ENCODE measurements at regions of chr11 and their contacts with region 1.

Region 1: DNA sequence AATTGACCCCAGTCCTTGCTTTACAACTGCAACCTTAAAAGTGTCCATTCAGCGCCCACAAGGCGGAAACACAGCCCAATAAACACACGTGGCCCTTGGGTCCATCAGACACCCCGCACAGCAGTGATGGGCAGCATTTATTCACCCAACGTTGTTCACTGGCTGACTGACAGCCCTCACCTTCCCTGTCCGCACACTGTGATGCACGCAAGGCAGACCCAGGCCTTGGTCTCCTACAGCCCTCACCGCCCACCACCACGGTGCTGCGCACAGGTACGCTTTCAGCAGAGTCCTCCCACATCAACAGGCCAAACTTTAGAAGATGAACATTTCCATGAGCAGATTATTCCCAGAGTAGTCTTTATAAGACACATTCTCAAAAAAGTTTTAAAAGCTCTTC is 20.7 kb upstream of the PHLDA2 start:
- DNase-seq: no peak
- H3K4me3 ChIP-seq: no peak overlapping the region
- H3K27ac ChIP-seq: no peak overlapping the region
- H3K4me1 ChIP-seq: peaks cover 0 to 13% of the 10 kb centered on the region in 2 donors
- H3K27me3 ChIP-seq: no peaks in the 10 kb centered on the region
- CTCF ChIP-seq: no peak
- POLR2A ChIP-seq: no peak

Region 2: GRCh38 chr11:2933384-2934020 is 16.4 kb before region 1 on chr11:
- intact Hi-C with region 1: loop called in 1 of 2 experiments (anchors 2 kb)
- DNase-seq: peak in 6 of 7 donors; percentile 61 to 80 (median 72)
- H3K4me3 ChIP-seq: no peak overlapping the region
- H3K27ac ChIP-seq: peak overlapping the region in 1 of 5 donors; percentile 71
- H3K4me1 ChIP-seq: peaks cover 16 to 22% of the 10 kb centered on the region in 2 donors
- H3K27me3 ChIP-seq: peaks cover 3% of the 10 kb centered on the region
- CTCF ChIP-seq: no peak
- POLR2A ChIP-seq: no peak

Measured in adrenal gland (tissue), 19 donors.